ENCODE measurements at regions of chr9 and their contacts with region 1.

Region 1: DNA sequence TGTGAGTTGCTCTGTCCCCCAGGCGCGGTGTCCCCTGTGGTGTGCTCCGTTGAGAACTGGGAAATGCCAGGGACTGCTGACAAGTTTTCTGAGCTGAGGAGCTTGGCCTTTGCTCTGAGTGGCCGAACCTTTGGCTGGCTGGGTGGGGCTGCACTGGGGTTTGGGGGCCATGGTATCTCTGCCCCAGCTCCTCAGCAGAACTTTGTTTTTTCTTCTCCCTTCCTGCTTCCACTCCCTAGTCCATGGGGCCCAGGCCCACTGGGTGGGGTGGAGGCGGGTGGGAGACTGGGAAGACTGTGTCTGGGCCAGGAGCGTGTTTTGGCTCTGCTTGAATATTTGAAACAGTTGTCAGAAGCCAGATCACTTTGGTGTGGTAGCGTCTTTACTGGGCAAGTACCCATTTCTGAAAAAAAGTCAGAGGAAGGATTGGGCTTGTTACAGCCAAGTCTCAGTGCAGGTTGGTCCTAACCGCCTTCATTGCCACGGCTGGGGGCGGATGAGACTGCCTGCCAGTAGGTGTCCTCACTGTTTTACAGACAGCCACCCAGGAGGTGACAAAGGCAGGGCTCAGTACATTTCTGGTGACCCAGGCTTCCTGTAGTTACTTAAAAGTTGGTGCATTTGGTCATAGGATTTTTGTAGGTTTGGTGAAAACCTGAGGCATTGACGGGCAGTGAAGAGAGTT is 92.7 kb downstream of the DAB2IP start:
- DNase-seq: peak in 1 of 2 donors; percentile 85
- ATAC-seq: peak; percentile 66
- H3K4me3 ChIP-seq: peak overlapping the region; percentile 29 to 60
- H3K27ac ChIP-seq: peak overlapping the region in 1 of 2 donors; percentile 97
- H3K4me1 ChIP-seq: peaks cover 0 to 3% of the 10 kb centered on the region in 2 donors
- H3K27me3 ChIP-seq: no peaks in the 10 kb centered on the region

Region 2: GRCh38 chr9:121698627-121699570 is 45.2 kb before region 1 on chr9:
- intact Hi-C with region 1: loop called (anchors 5 kb)
- DNase-seq: peak; percentile 74 to 88
- ATAC-seq: peak; percentile 3
- H3K4me3 ChIP-seq: peak overlapping the region; percentile 32 to 59
- H3K27ac ChIP-seq: no peak overlapping the region
- H3K4me1 ChIP-seq: no peaks in the 10 kb centered on the region
- H3K27me3 ChIP-seq: no peaks in the 10 kb centered on the region

Region 3: GRCh38 chr9:121770415-121771273 is 26.5 kb after region 1 on chr9:
- intact Hi-C with region 1: loop called in 1 of 2 experiments (anchors 1 kb)
- DNase-seq: peak; percentile 42 to 52
- ATAC-seq: no peak
- H3K4me3 ChIP-seq: no peak overlapping the region
- H3K27ac ChIP-seq: peak overlapping the region; percentile 62 to 93
- H3K4me1 ChIP-seq: no peaks in the 10 kb centered on the region
- H3K27me3 ChIP-seq: no peaks in the 10 kb centered on the region

Region 4: DNA sequence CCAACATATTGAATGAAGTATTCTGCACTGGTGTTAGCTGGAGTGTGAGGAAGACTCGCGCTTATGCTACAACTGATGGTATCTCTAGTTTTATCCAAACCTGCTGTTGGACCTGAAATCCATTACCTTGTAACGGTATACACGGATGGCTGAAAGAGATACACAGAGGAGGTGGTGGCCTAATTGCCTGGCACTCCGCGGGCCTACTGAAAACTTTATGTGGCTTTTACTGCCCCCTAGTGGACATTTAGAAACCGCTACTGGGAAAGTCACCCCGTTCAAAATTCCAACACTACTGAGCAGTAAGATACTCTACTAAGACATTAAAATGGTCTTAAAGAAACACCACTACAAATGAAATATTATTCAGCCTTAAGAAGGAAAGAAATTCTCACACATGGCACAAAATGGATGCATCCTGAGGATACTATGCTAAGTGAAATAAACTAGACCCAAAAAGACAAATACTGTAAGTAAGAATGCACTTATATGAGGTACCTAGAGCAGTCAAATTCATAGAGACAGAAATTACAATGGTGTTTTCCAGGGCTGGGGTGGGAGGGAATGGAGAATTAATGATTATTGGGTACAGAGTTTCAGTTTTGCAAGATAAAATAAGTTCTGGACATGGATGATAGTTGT is 248.5 kb after region 1 on chr9:
- intact Hi-C with region 1: loop called in 1 of 2 experiments (anchors 10 kb)
- DNase-seq: peak in 1 of 2 donors; percentile 55
- ATAC-seq: peak; percentile 71
- H3K4me3 ChIP-seq: no peak overlapping the region
- H3K27ac ChIP-seq: no peak overlapping the region
- H3K4me1 ChIP-seq: no peaks in the 10 kb centered on the region
- H3K27me3 ChIP-seq: no peaks in the 10 kb centered on the region

Region 5: GRCh38 chr9:122075135-122076030 is 331.2 kb after region 1 on chr9:
- intact Hi-C with region 1: loop called in 1 of 2 experiments (anchors 10 kb)
- DNase-seq: no peak
- ATAC-seq: peak; percentile 80
- H3K4me3 ChIP-seq: peak overlapping the region in 1 of 2 donors; percentile 6
- H3K27ac ChIP-seq: peak overlapping the region; percentile 100
- H3K4me1 ChIP-seq: peaks cover 0 to 7% of the 10 kb centered on the region in 2 donors
- H3K27me3 ChIP-seq: no peaks in the 10 kb centered on the region

Measured in aorta (tissue), 5 donors.